GM10248 (cell line): ENCODE measurements at regions of chr4 and their contacts with region 1.

Region 1: DNA sequence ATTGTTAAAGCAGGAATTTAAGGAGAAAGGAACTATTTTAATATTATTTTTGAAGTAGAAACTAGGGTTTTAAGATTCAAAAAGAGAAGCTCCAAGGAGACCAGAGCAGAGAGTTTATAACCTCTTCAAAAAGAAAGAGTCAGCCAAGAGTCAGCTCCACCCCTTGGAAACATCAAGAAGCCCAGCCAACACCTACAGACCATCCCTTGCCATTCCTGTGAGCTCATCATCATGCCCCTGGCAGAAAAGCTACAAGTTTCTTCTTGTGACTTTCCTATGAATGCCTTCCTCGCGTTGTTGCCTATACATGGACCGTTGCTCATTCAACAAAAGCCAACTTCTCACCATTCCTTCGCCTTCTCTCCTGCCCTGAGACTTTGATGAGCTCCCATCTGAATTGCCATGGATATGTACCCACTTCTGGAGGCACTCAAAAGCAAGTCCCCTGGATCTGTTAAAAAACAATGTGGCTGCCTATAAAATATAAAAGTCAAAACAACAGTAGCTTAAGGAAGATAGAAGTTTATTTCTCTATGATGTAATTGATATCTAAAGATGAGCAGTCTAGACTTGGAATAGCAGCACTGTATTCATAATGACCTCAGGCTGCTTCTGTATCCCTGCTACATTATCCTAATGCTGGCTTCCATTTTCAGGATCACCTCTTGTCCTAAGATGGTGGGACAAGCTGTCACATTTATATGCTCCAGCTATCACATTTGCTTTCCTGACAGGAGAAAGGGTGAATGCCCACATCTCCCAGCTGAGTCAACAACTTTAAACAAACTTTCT is 20.3 kb downstream of the PLRG1 start:
- DNase-seq: no peak
- CTCF ChIP-seq: no peak

Region 2: GRCh38 chr4:154254999-154255398 is 274.9 kb before region 1 on chr4:
- CTCF ChIA-PET with region 1: no interaction called
- POLR2A ChIA-PET with region 1: no interaction called
- DNase-seq: no peak
- CTCF ChIP-seq: no peak

Region 3: GRCh38 chr4:154485127-154485773 is 44.7 kb before region 1 on chr4:
- CTCF ChIA-PET with region 1: no interaction called
- POLR2A ChIA-PET with region 1: no interaction called
- DNase-seq: peak; percentile 38
- CTCF ChIP-seq: no peak

Region 4: DNA sequence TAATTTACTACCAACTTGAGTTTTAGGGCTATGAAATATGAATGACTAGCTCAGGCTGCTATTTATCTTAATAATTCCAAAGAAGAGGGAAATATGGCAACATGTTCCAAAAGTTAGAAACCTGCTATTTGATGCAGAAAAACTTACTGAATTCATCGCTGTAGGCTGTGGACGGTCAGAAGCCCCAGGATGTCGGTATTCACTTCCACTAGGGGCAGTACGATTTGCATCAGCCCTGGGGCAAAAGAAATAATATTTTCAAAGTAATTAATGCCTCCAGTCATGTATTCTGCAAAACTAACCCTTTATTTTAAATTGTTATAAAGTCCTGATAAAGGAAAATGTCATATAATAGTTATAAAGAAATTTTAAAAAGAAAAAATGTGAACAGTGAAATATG is 15.8 kb after region 1 on chr4:
- CTCF ChIA-PET with region 1: interaction called, 18 read pairs
- POLR2A ChIA-PET with region 1: no interaction called
- DNase-seq: no peak
- CTCF ChIP-seq: no peak